ENCODE measurements at regions of chr17 and their contacts with region 1.

Region 1: DNA sequence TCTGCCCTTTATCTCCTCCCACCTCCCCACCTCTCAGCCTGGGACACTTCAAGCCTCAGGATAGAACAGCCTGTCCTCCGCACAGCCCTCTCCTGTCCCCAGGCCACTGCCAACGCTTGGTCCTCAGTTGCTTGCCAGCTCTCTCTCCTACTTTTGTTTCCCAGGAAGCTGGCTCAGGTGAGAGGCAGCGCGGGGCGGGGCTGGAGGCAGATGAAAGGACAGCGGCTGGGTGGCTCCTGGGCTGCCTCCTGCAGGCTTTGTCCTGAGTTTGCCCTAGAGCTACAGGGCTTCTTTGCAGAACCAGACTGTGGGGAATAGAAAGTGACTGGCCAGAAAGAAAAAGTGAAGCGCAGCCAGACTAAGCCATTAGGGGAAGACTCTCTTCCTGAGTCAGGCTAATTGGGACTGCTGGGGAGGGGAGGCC is 48.2 kb upstream of the CDC42EP4 start:
- DNase-seq: peak in 2 of 5 donors; percentile 66 to 72
- ATAC-seq: peak; percentile 38 to 74 (median 72)
- H3K4me3 ChIP-seq: no peak overlapping the region
- H3K27ac ChIP-seq: peak overlapping the region in 2 of 12 donors; percentile 24 to 28
- H3K4me1 ChIP-seq: peaks cover 0 to 43% (median 9%) of the 10 kb centered on the region in 12 donors
- H3K27me3 ChIP-seq: no peaks in the 10 kb centered on the region
- CTCF ChIP-seq: no peak
- POLR2A ChIP-seq: no peak

Region 2: GRCh38 chr17:73142872-73143381 is 217.1 kb before region 1 on chr17:
- intact Hi-C with region 1: no loop called
- DNase-seq: no peak
- ATAC-seq: peak in 3 of 4 donors; percentile 64 to 81 (median 73)
- H3K4me3 ChIP-seq: no peak overlapping the region
- H3K27ac ChIP-seq: peak overlapping the region in 2 of 12 donors; percentile 37 to 91
- H3K4me1 ChIP-seq: peaks cover 0 to 20% (median 0%) of the 10 kb centered on the region in 12 donors
- H3K27me3 ChIP-seq: peaks cover 0 to 7% (median 0%) of the 10 kb centered on the region in 9 donors
- CTCF ChIP-seq: no peak
- POLR2A ChIP-seq: no peak

Region 3: GRCh38 chr17:73324160-73324475 is 35.9 kb before region 1 on chr17:
- intact Hi-C with region 1: loop called in 2 of 10 experiments (anchors 5 kb)
- DNase-seq: peak in 2 of 5 donors; percentile 24 to 53
- ATAC-seq: peak in 3 of 4 donors; percentile 14 to 50 (median 37)
- H3K4me3 ChIP-seq: no peak overlapping the region
- H3K27ac ChIP-seq: no peak overlapping the region
- H3K4me1 ChIP-seq: peaks cover 0 to 28% (median 7%) of the 10 kb centered on the region in 12 donors
- H3K27me3 ChIP-seq: no peaks in the 10 kb centered on the region
- CTCF ChIP-seq: no peak
- POLR2A ChIP-seq: no peak

Region 4: GRCh38 chr17:73349138-73349537 is 10.9 kb before region 1 on chr17:
- intact Hi-C with region 1: loop called in 1 of 10 experiments (anchors 1 kb)
- DNase-seq: no peak
- ATAC-seq: peak in 3 of 4 donors; percentile 8 to 41 (median 37)
- H3K4me3 ChIP-seq: no peak overlapping the region
- H3K27ac ChIP-seq: peak overlapping the region in 2 of 12 donors; percentile 5 to 87
- H3K4me1 ChIP-seq: peaks cover 0 to 7% (median 0%) of the 10 kb centered on the region in 12 donors
- H3K27me3 ChIP-seq: no peaks in the 10 kb centered on the region
- CTCF ChIP-seq: no peak
- POLR2A ChIP-seq: no peak